AG04449 (cell line): ENCODE measurements at regions of chr3 and their contacts with region 1.

Region 1: GRCh38 chr3:172332256-172333041 is 115.8 kb downstream of the GHSR start:
- DNase-seq: no peak
- H3K4me3 ChIP-seq: no peak overlapping the region
- CTCF ChIP-seq: peak; percentile 89

Region 2: GRCh38 chr3:172317984-172318383 is 14.5 kb before region 1 on chr3:
- CTCF ChIA-PET with region 1: interaction called, 99 read pairs
- POLR2A ChIA-PET with region 1: no interaction called
- DNase-seq: peak; percentile 77
- H3K4me3 ChIP-seq: no peak overlapping the region
- CTCF ChIP-seq: no peak

Region 3: GRCh38 chr3:172355839-172356238 is 23.4 kb after region 1 on chr3:
- CTCF ChIA-PET with region 1: interaction called, 27 read pairs
- POLR2A ChIA-PET with region 1: no interaction called
- DNase-seq: peak; percentile 76
- H3K4me3 ChIP-seq: no peak overlapping the region
- CTCF ChIP-seq: no peak